ENCODE measurements at regions of chr5 and their contacts with region 1.

Region 1: GRCh38 chr5:128083033-128083810 is at the start of gene SLC12A2:
- DNase-seq: peak; percentile 79 to 96 (median 92)

Region 2: GRCh38 chr5:127875235-127876021 is 207.8 kb before region 1 on chr5:
- intact Hi-C with region 1: loop called (anchors 10 kb)
- DNase-seq: peak; percentile 13 to 86 (median 59)

Region 3: DNA sequence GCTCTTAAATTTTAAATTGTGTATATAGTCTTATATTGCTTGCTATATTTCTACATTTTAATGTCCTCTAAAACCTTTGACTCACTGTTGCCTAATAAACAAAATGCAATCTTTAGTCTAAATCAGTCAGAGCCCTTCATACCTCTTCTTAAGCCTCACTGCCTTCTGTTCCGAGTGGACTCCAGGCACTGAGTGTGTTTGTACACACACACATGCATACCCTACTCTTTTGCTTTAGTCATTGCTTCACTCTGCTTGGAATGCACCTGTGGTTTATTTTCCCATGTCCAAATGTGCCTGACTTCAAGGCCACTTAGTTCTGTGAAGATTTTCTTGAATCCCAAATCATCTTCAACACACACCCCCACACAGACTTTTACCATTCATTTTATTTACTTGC is 61.3 kb after region 1 on chr5:
- intact Hi-C with region 1: loop called (anchors 10 kb)
- DNase-seq: no peak

Measured in head of caudate nucleus (tissue), 42 donors.